Posterior vena cava (tissue), 2 donors: ENCODE measurements at regions of chr16 and their contacts with region 1.

Region 1: DNA sequence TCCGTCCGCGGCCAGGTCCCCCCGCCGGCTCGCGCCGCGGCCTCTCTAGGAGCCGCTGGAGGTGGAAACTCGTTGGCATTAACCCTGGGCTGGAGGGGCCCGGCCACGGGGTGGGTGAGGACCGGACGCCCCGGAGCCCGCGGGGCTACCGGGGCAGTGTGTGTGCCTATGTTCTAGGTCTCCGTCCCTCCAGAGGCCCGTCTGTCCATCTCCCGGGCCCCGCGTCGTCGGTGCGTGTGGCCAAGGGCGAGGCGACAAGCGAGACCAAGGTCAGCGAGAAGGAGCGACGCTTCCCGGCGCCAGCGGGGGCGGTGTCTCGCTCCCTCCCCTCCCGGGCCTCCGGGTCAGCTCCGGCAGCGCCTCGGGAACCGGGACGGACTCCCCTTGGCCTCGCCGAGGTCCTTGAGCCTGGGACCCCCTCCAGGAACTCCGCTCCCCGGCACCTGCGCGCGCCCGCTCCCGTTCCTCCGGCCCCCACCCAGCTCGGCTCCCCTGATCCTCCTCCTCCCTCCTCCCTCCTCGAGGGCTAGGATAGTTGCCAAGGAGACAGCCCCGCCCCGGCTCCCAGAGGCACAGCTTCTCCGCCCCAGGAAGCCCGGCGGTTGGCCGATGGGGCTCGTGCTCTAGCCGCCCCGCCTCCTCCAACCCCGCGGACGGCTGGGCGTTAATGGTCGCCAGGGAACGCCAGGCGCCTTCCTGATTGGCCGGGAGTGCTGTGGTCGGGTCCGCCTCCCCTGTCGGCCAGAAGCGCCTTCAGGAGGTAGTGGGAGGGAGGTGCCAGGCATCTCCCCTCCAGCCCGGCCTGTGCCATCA is 663 bp upstream of the ZNF768 start:
- DNase-seq: peak; percentile 99

Region 2: GRCh38 chr16:30395155-30395991 is 131.7 kb before region 1 on chr16 and contains the start of gene ZNF48:
- intact Hi-C with region 1: no loop called
- DNase-seq: peak; percentile 97
- total RNA-seq, gene ZNF48: 6.2 to 6.5 TPM

Region 3: DNA sequence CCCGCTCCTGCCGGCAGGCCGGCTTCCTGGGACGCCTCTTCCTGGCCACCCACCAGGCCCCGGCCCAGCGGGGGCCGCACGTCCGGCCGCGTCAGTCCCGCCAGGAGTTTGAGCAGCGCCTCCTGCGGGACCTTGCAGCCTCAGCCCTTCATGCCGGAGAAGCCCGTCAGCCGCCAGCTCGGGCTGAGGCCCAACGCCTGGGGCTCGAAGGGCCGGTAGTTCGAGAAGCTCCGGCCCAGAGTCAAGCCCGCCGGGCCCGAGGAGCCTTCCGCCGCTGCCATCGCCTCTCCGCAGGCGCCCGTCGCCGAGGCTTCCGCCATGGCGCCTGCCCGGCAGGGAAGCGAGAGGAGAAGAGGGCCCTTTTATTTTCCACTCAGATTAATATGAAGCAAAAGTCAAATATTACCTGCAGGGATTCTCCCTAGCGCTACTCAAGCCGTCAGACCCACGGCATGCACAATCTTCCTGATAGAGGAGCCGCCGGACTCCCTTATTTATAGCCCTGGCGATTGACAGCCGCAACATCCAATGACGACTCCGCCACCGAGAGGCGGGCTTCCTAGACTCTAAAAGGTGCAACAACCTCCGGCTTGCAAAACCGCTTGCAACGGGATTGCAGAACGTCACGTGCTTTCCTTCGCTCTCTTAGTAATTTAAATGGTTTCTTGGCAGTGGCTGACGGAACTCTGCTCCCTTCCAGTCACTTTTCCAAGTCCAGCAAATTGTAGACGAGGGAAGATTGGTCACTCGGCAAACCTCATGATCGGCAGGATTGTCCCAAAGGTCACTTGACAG is 81.4 kb before region 1 on chr16 and contains the start of gene SEPHS2:
- intact Hi-C with region 1: loop called in 1 of 2 experiments (anchors 10 kb)
- DNase-seq: peak; percentile 99
- total RNA-seq, gene SEPHS2: 31.5 to 32.5 TPM

Region 4: DNA sequence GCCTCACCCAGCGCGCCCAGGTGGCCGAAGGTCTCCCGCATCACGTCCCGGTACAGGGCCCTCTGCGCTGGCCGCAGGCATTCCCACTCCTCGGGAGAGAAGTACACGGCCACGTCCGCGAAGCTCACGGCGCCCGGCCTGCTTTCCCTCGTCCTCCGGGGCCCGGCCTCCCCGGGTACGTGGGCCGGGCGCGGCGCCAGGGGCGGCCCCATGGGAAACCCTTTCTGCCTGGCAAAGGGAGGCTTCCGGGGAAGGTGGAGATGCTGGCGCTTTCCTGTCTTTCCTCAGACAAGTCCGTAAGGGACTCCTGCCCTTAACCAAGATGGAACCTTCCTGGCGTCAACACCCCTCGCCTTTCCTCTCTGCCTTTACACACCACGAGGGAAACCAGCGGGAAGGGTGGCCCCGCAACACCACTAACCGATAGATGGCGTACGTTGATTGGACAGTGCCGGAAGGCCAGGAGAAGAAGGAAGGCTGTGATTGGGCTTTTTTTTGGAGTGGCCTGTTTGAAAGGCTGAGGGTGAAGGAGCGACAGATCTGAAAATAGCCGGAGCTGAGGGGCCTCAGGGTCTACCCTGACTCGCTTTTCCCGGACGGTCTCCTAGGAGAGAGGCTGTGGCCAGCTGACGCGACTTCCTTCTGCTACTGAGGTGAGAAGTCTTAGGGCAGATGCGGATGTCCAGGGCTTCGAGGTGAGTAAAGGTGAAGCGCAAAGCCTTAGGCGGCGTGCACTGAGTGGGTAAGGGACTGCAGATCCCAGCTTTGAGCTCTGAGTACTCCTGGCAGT is 58.6 kb after region 1 on chr16 and contains the start of gene ZNF785:
- intact Hi-C with region 1: loop called in 1 of 2 experiments (anchors 10 kb)
- DNase-seq: peak; percentile 97
- total RNA-seq, gene ZNF785: 10.2 to 10.5 TPM